ENCODE measurements at regions of chr17 and their contacts with region 1.

Region 1: GRCh38 chr17:57255776-57256681 is at the start of gene MSI2:
- DNase-seq: peak; percentile 93
- H3K4me3 ChIP-seq: peak within 1 kb of the TSS; percentile 89
- H3K27ac ChIP-seq: peak within 1 kb of the TSS; percentile 74
- H3K4me1 ChIP-seq: peaks cover 8% of the 10 kb centered on the region
- H3K27me3 ChIP-seq: no peaks in the 10 kb centered on the region
- CTCF ChIP-seq: 0 out of 2 replicates have a peak, but pooled peaks have one; percentile 10
- total RNA-seq, gene MSI2: 108 and 111 TPM in 2 replicates

Region 2: GRCh38 chr17:57282296-57282695 is 26.3 kb after region 1 on chr17:
- CTCF ChIA-PET with region 1: no interaction called
- POLR2A ChIA-PET with region 1: interaction called, 17 read pairs
- intact Hi-C with region 1: no loop called
- DNase-seq: peak; percentile 21
- H3K4me3 ChIP-seq: no peak overlapping the region
- H3K27ac ChIP-seq: peak overlapping the region; percentile 23
- H3K4me1 ChIP-seq: peaks cover 39% of the 10 kb centered on the region
- H3K27me3 ChIP-seq: no peaks in the 10 kb centered on the region
- CTCF ChIP-seq: 0 out of 2 replicates have a peak, but pooled peaks have one; percentile 12